ENCODE measurements at regions of chr10 and their contacts with region 1.

Region 1: DNA sequence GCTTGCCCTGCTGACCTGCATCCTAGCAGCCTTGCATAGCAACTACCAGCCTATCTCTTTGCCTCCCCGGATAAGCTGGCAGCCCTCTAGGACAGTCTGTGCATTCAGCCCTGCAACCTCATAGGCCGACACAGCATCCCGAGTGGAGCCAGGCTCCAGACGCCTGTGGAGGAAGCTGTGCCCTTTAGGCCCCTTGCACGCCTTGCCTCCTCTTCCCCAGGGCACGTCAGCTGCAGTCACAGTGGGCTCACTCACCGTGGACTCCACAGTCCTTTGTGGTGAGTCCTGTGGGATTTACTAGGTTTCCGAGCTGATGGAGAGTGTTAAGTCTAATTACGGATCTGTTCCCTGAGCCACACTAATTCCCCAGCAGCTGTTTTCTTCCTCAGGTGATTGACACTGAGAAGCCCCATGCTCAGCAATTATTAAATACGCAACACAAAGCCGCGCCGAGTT is 540.0 kb downstream of the TCERG1L start:
- DNase-seq: no peak
- ATAC-seq: no peak
- H3K4me3 ChIP-seq: no peak overlapping the region
- H3K4me3 Mint-ChIP-seq: no peak overlapping the region
- H3K27ac ChIP-seq: no peak overlapping the region
- H3K27ac Mint-ChIP-seq: no peak overlapping the region
- H3K4me1 ChIP-seq: no peaks in the 10 kb centered on the region
- H3K4me1 Mint-ChIP-seq: no peaks in the 10 kb centered on the region
- H3K27me3 ChIP-seq: no peaks in the 10 kb centered on the region
- H3K27me3 Mint-ChIP-seq: peaks cover 2% of the 10 kb centered on the region
- CTCF ChIP-seq: no peak

Region 2: DNA sequence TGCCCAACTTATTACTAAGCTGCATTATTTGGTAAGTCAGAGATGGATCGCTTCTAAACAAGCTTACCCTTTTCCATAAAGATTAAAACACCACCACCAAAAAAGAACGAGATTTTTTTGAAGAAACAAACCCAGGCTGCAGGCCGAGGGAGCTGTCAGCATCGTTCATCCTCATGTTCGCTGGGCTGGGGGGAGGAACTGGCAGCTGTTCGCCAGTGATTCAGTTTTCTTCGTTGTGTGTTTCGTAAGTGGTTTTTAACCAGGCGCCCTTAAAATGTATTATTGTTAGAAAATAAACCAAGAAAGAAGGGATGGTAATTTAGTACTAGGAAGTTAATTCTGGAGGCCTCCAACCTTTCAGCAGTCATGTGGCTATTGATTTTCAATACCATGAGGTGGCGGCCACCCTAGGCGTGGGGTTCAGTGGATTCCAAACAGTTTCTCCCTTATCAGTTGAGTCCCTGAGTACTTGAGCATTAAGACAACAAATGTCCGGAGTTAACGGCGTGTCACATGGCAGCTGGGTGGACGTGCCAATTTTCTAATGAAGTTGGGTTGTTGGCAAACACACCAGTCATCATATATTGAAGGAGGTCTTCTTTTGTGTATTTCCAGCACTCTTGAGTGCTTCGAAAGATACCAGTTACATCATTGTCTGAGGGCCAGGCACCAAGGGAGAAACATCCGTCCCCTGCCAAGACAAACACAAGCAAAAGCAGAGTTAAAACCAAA is 980.6 kb before region 1 on chr10:
- CTCF ChIA-PET with region 1: no interaction called
- POLR2A ChIA-PET with region 1: no interaction called
- intact Hi-C with region 1: loop called in 1 of 2 experiments (anchors 10 kb)
- DNase-seq: no peak
- ATAC-seq: no peak
- H3K4me3 ChIP-seq: no peak overlapping the region
- H3K4me3 Mint-ChIP-seq: no peak overlapping the region
- H3K27ac ChIP-seq: no peak overlapping the region
- H3K27ac Mint-ChIP-seq: no peak overlapping the region
- H3K4me1 ChIP-seq: no peaks in the 10 kb centered on the region
- H3K4me1 Mint-ChIP-seq: no peaks in the 10 kb centered on the region
- H3K27me3 ChIP-seq: no peaks in the 10 kb centered on the region
- H3K27me3 Mint-ChIP-seq: no peaks in the 10 kb centered on the region
- CTCF ChIP-seq: no peak